ENCODE measurements at regions of chr4 and their contacts with region 1.

Region 1: GRCh38 chr4:123661080-123661737 is 264.6 kb downstream of the SPRY1 start:
- DNase-seq: no peak
- ATAC-seq: no peak
- H3K4me3 Mint-ChIP-seq: no peak overlapping the region
- H3K27ac Mint-ChIP-seq: no peak overlapping the region
- H3K4me1 Mint-ChIP-seq: peaks cover 12% of the 10 kb centered on the region
- H3K27me3 Mint-ChIP-seq: peaks cover 17% of the 10 kb centered on the region
- CTCF ChIP-seq: no peak

Region 2: GRCh38 chr4:123127218-123127617 is 534.0 kb before region 1 on chr4:
- CTCF ChIA-PET with region 1: interaction called, 4 read pairs
- POLR2A ChIA-PET with region 1: no interaction called
- intact Hi-C with region 1: loop called (anchors 1 kb)
- DNase-seq: no peak
- ATAC-seq: no peak
- H3K4me3 Mint-ChIP-seq: no peak overlapping the region
- H3K27ac Mint-ChIP-seq: no peak overlapping the region
- H3K4me1 Mint-ChIP-seq: no peaks in the 10 kb centered on the region
- H3K27me3 Mint-ChIP-seq: no peaks in the 10 kb centered on the region
- CTCF ChIP-seq: no peak

Region 3: GRCh38 chr4:123250843-123251242 is 410.4 kb before region 1 on chr4:
- CTCF ChIA-PET with region 1: no interaction called
- POLR2A ChIA-PET with region 1: no interaction called
- intact Hi-C with region 1: loop called (anchors 10 kb)
- DNase-seq: no peak
- ATAC-seq: no peak
- H3K4me3 Mint-ChIP-seq: no peak overlapping the region
- H3K27ac Mint-ChIP-seq: no peak overlapping the region
- H3K4me1 Mint-ChIP-seq: no peaks in the 10 kb centered on the region
- H3K27me3 Mint-ChIP-seq: no peaks in the 10 kb centered on the region
- CTCF ChIP-seq: no peak

Measured in activated B cell treated with CpG ODN at 0.5 μM for 24 hours (primary cell).